Left colon (tissue), 2 donors: ENCODE measurements at regions of chr17 and their contacts with region 1.

Region 1: DNA sequence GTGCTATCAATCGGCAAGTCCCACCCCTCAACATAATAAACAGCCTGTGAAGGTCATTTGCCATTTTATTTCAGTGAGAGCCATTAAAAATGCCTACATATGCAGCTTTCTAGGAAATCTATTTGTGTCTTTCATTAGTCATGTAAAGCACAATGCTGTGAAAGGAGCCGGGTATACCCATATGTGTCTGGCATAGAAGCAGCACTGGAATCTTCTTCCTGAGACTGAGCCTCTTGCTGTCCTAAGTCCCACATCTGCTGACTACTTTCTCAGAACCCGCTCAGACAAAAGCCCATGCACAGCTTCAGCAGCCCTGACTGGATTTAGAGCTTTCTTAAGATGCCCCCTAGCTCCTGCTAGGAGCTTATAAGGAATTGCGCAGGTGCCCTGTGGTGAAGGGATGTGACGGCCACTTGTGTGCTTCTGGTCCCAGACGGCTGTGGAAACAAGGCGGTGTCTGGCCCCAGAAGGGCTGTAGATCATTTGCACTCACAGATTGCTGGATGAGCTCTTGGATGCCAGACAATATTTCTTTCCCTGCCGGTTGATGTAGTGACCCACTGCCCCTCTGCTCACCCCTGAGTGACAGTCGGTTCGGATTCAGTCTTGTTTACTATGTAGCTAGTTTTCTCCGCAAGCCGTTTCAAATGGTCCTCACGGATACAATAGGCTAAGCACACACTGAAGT is 172.2 kb downstream of the ANKFN1 start:
- DNase-seq: no peak
- ATAC-seq: no peak

Region 2: GRCh38 chr17:55845385-55845784 is 480.1 kb before region 1 on chr17:
- intact Hi-C with region 1: loop called in 1 of 2 experiments (anchors 10 kb)
- DNase-seq: peak; percentile 26 to 48
- ATAC-seq: peak; percentile 76

Region 3: GRCh38 chr17:56244268-56244890 is 81.1 kb before region 1 on chr17:
- intact Hi-C with region 1: no loop called
- DNase-seq: no peak
- ATAC-seq: no peak